ENCODE measurements at regions of chr1 and their contacts with region 1.

Region 1: DNA sequence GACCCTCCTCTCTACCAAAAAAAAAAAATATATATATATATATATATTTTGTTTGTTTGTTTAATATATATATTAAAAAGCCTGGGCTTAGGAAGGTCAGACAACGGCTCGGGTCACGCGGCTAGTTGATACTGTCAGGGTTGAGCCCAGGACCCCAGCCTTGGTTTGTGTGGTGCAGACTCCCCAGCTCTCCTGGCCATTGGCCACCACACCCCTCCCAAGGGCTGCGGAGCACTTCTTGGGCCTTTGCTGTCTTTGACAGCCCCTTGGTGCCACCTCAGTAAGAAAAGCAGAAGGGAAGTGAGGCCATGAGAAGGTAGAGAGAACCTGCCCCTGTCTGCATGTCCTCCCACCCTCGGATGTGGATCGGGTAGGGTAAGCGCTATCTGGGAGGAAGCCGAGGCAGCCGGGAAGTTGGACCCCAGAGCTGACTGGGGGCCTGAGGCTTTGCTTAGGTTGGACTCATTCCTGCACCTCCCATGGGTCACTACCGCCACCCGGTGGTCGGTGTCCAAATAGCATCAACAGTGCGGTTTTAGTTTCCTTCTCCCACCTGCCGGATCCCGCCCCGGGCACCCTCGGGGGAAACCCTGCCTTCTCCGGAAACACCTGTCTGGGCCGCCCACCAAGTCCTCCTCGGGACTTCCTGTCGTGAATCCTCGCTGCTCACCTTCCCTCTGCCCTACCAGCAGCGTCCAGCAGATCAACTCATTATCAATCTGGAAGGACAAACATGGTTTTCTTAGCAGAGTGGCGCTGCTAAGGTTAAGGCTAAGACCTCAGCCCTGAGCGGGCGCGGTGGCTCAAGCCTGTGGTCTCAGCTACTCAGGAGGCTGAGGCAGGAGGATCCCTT is 29.8 kb upstream of the GNPAT start:
- DNase-seq: peak; percentile 73 to 92 (median 82)
- ATAC-seq: peak; percentile 99
- H3K4me3 ChIP-seq: peak overlapping the region; percentile 22 to 38
- H3K27ac ChIP-seq: no peak overlapping the region
- H3K4me1 ChIP-seq: peaks cover 0 to 9% of the 10 kb centered on the region in 2 donors
- H3K27me3 ChIP-seq: no peaks in the 10 kb centered on the region
- CTCF ChIP-seq: peak; percentile 82 to 85

Region 2: GRCh38 chr1:230917284-230918135 is 293.7 kb before region 1 on chr1:
- intact Hi-C with region 1: loop called in 1 of 2 experiments (anchors 10 kb)
- DNase-seq: peak; percentile 45 to 80 (median 65)
- ATAC-seq: peak; percentile 92
- H3K4me3 ChIP-seq: no peak overlapping the region
- H3K27ac ChIP-seq: no peak overlapping the region
- H3K4me1 ChIP-seq: no peaks in the 10 kb centered on the region
- H3K27me3 ChIP-seq: no peaks in the 10 kb centered on the region
- CTCF ChIP-seq: peak; percentile 67 to 73

Measured in left lung (tissue), 14 donors.